Aorta (tissue), 5 donors: ENCODE measurements at regions of chr17 and their contacts with region 1.

Region 1: GRCh38 chr17:56441331-56441730 is 152.2 kb upstream of the NOG start:
- DNase-seq: no peak
- ATAC-seq: no peak
- H3K4me3 ChIP-seq: no peak overlapping the region
- H3K27ac ChIP-seq: no peak overlapping the region
- H3K4me1 ChIP-seq: no peaks in the 10 kb centered on the region
- H3K27me3 ChIP-seq: no peaks in the 10 kb centered on the region

Region 2: GRCh38 chr17:56457501-56457900 is 16.2 kb after region 1 on chr17:
- intact Hi-C with region 1: loop called in 1 of 2 experiments (anchors 1 kb)
- DNase-seq: no peak
- ATAC-seq: no peak
- H3K4me3 ChIP-seq: no peak overlapping the region
- H3K27ac ChIP-seq: no peak overlapping the region
- H3K4me1 ChIP-seq: no peaks in the 10 kb centered on the region
- H3K27me3 ChIP-seq: no peaks in the 10 kb centered on the region